Posterior vena cava (tissue), 2 donors: ENCODE measurements at regions of chr12 and their contacts with region 1.

Region 1: DNA sequence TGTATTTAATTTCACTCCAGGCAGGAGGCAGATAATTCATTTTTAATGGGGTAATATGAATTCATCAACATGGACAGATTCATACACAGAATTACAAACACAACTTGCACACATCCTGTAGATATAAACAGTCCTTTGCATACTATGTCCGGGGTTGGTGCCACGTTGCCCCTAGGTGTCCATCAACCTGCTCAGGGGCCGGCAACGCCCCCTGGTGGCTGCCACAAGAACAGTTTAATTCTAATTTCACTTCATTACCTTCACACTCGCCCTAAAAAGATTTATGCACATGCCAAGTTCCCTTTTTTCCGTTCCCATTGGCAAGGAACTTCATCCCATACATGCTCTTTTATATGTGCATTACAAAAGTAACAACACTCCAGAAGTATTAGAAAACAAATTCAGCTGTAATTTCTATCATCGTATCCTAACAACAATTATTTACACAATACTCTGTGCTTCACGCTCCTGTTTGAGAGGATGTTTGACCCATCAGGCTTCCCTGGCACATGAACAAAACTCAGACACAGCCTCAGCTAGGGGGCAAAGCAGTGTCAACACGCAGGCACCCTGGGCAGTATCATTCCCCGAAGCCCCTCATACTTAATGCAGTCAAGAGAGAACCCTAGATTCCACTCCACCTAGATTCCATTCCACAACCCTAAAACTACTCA is 15.5 kb downstream of the MANSC1 start:
- DNase-seq: no peak

Region 2: DNA sequence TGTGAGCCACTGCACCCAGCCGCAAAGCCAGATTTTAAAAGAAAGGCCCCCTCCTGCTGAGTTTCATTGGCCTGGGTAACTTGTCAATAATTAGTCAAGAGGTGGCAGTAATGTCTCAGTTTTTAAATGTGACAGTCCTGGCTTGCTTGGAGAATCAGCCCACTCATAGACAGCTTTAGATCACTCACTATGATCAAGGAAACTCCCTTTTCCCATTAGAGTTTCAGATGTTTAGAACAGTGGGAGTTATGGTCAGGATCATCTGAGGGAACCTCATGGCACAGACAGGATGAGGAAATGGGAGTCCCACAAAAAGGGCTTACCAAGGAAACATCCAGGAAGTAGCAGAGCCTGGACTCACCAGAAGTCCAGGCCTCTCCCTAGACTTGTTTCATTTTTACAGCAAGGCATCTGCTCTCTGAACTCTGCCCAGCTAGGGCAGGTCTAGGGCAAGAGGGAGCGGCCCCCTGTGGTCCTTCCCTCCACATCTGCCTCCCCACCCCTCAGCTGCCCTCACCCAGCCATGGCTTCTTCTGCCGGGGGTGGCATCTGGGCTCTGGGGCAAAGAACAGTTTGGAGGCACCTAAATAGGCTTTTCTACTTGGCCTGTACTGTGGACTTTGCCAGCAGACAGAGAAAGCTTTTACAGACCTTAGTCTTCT is 252.5 kb before region 1 on chr12:
- intact Hi-C with region 1: loop called in 1 of 2 experiments (anchors 10 kb)
- DNase-seq: no peak